Activated CD4-positive, alpha-beta memory T cell treated with anti-CD3 and anti-CD28 coated beads, Interleukin-2, amount 10 ng/mL, durations not matched to agents 7 days and 5 days (primary cell): ENCODE measurements at regions of chr5 and their contacts with region 1.

Region 1: DNA sequence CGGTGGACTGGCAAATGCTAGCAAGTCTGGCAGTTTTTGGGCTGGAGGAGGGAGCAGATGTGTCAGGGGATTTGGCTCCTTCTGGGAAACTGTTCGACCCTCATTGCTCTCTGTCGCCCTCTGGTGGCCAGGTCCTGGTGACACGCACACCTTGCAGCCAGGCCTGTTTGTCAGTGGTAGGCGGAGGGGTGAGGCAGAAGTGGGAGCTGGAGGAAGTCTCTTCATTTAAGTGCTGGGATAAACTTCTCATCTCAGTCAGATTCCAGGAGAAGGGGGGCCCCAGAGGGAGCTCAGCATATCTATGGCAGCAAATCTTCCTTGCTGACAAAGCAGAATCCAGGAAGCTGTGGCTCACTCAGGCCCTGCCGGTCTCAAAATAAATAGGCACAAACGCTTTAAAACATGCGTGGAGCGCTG is 326.5 kb downstream of the ZSWIM6 start:
- DNase-seq: peak; percentile 78
- H3K4me3 Mint-ChIP-seq: no peak overlapping the region
- H3K27ac Mint-ChIP-seq: no peak overlapping the region
- H3K4me1 Mint-ChIP-seq: no peaks in the 10 kb centered on the region
- H3K27me3 Mint-ChIP-seq: peaks cover 20% of the 10 kb centered on the region

Region 2: GRCh38 chr5:60960591-60960990 is 698.0 kb before region 1 on chr5:
- CTCF ChIA-PET with region 1: interaction called, 15 read pairs
- POLR2A ChIA-PET with region 1: no interaction called
- DNase-seq: no peak
- H3K4me3 Mint-ChIP-seq: no peak overlapping the region
- H3K27ac Mint-ChIP-seq: no peak overlapping the region
- H3K4me1 Mint-ChIP-seq: no peaks in the 10 kb centered on the region
- H3K27me3 Mint-ChIP-seq: no peaks in the 10 kb centered on the region

Region 3: GRCh38 chr5:61055434-61056006 is 603.1 kb before region 1 on chr5:
- CTCF ChIA-PET with region 1: interaction called, 20 read pairs
- POLR2A ChIA-PET with region 1: no interaction called
- DNase-seq: no peak
- H3K4me3 Mint-ChIP-seq: no peak overlapping the region
- H3K27ac Mint-ChIP-seq: no peak overlapping the region
- H3K4me1 Mint-ChIP-seq: no peaks in the 10 kb centered on the region
- H3K27me3 Mint-ChIP-seq: no peaks in the 10 kb centered on the region

Region 4: GRCh38 chr5:61505281-61505680 is 153.3 kb before region 1 on chr5:
- CTCF ChIA-PET with region 1: no interaction called
- POLR2A ChIA-PET with region 1: no interaction called
- DNase-seq: no peak
- H3K4me3 Mint-ChIP-seq: no peak overlapping the region
- H3K27ac Mint-ChIP-seq: no peak overlapping the region
- H3K4me1 Mint-ChIP-seq: no peaks in the 10 kb centered on the region
- H3K27me3 Mint-ChIP-seq: no peaks in the 10 kb centered on the region